Activated CD4-positive, alpha-beta memory T cell treated with anti-CD3 and anti-CD28 coated beads for 36 hours (primary cell): ENCODE measurements at regions of chrX and their contacts with region 1.

Region 1: GRCh38 chrX:78945186-78945912 is at the start of gene P2RY10:
- DNase-seq: peak; percentile 38
- H3K4me3 Mint-ChIP-seq: peak within 1 kb of the TSS; percentile 85
- H3K27ac Mint-ChIP-seq: peak within 1 kb of the TSS; percentile 90
- H3K4me1 Mint-ChIP-seq: peaks cover 44% of the 10 kb centered on the region
- H3K27me3 Mint-ChIP-seq: no peaks in the 10 kb centered on the region
- total RNA-seq, gene P2RY10: 38.8 to 39.3 TPM

Region 2: GRCh38 chrX:78103623-78104446 is 841.5 kb before region 1 on chrX and contains the start of gene PGK1:
- CTCF ChIA-PET with region 1: no interaction called
- POLR2A ChIA-PET with region 1: interaction called, 4 read pairs
- intact Hi-C with region 1: loop called (anchors 10 kb)
- DNase-seq: peak; percentile 96
- H3K4me3 Mint-ChIP-seq: peak within 1 kb of the TSS; percentile 93
- H3K27ac Mint-ChIP-seq: peak within 1 kb of the TSS; percentile 90
- H3K4me1 Mint-ChIP-seq: peaks cover 40% of the 10 kb centered on the region
- H3K27me3 Mint-ChIP-seq: no peaks in the 10 kb centered on the region
- total RNA-seq, gene PGK1: 908 to 924 TPM

Region 3: DNA sequence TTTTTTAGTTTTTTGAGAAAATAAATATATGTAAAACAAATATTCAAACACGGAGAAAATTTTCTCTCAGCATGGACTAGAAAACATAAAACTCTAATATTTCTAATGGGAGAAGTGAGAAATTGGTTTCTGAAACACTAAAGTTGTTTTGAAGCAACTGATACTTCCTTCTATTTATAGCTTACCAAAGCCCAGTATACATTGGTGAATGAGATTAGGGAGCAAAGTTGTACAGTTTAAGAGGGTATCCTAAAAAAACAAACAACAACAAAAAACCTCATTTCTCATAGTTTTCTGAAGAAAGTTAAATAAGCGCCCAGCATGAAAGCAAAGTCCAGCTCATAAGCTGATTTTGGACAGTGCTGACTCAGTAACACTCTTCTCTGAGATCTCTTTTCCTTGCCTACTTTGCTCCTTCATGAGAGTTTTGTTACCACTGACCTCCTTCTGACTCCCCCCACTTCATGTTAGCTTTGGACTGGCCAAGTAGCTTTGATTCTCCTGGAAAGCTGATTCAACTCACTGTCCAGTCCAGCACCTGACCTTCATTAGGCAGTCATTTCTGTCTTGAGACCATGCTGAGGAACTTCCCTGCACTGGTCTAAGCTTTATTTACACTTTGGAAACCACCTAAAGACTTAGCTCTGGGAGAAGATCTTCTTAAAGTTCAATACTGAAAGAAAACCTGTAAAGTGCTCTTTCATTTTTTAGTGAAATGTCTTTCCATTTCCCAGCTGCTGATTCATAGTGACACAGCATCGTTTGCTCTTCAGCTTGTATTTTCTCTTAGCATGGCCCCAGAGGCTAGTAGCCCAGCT is 21.9 kb before region 1 on chrX:
- CTCF ChIA-PET with region 1: interaction called, 3 read pairs
- POLR2A ChIA-PET with region 1: no interaction called
- intact Hi-C with region 1: loop called (anchors 1 kb)
- DNase-seq: no peak
- H3K4me3 Mint-ChIP-seq: peak overlapping the region; percentile 45
- H3K27ac Mint-ChIP-seq: peak overlapping the region; percentile 91
- H3K4me1 Mint-ChIP-seq: peaks cover 13% of the 10 kb centered on the region
- H3K27me3 Mint-ChIP-seq: no peaks in the 10 kb centered on the region

Region 4: GRCh38 chrX:79036157-79036880 is 91.0 kb after region 1 on chrX:
- CTCF ChIA-PET with region 1: no interaction called
- POLR2A ChIA-PET with region 1: no interaction called
- intact Hi-C with region 1: loop called (anchors 5 kb)
- DNase-seq: no peak
- H3K4me3 Mint-ChIP-seq: peak overlapping the region; percentile 20
- H3K27ac Mint-ChIP-seq: no peak overlapping the region
- H3K4me1 Mint-ChIP-seq: peaks cover 31% of the 10 kb centered on the region
- H3K27me3 Mint-ChIP-seq: no peaks in the 10 kb centered on the region

Region 5: DNA sequence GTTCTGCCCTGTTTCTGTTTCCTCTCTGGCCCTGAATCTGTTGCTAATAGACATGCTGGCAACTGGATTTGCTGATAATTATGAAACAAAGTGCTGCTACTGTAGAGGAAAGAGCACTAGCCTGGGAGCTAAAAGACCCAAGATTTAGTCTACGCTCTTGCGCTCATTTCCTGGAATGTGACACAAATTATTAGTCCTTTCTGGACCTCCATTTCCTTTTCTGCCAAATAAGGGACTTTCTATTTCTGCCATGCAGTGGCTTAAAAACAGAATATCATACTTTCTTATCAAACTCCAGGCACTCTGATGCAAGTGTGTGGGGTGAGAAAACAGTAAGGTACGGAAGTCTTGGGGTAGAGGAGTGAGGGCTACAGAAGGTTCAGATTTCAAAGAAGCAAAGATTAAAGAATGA is 150.8 kb after region 1 on chrX:
- CTCF ChIA-PET with region 1: no interaction called
- POLR2A ChIA-PET with region 1: no interaction called
- intact Hi-C with region 1: loop called (anchors 5 kb)
- DNase-seq: no peak
- H3K4me3 Mint-ChIP-seq: peak overlapping the region; percentile 60
- H3K27ac Mint-ChIP-seq: peak overlapping the region; percentile 89
- H3K4me1 Mint-ChIP-seq: peaks cover 77% of the 10 kb centered on the region
- H3K27me3 Mint-ChIP-seq: no peaks in the 10 kb centered on the region

Region 6: GRCh38 chrX:79182616-79183015 is 237.3 kb after region 1 on chrX:
- CTCF ChIA-PET with region 1: no interaction called
- POLR2A ChIA-PET with region 1: no interaction called
- intact Hi-C with region 1: loop called (anchors 5 kb)
- DNase-seq: peak; percentile 19
- H3K4me3 Mint-ChIP-seq: peak overlapping the region; percentile 61
- H3K27ac Mint-ChIP-seq: peak overlapping the region; percentile 91
- H3K4me1 Mint-ChIP-seq: peaks cover 66% of the 10 kb centered on the region
- H3K27me3 Mint-ChIP-seq: no peaks in the 10 kb centered on the region

Region 7: GRCh38 chrX:79366873-79367749 is 421.8 kb after region 1 on chrX and contains the start of gene ITM2A:
- CTCF ChIA-PET with region 1: no interaction called
- POLR2A ChIA-PET with region 1: interaction called, 3 read pairs
- intact Hi-C with region 1: loop called (anchors 2 kb)
- DNase-seq: peak; percentile 75
- H3K4me3 Mint-ChIP-seq: peak within 1 kb of the TSS; percentile 95
- H3K27ac Mint-ChIP-seq: peak within 1 kb of the TSS; percentile 95
- H3K4me1 Mint-ChIP-seq: peaks cover 24% of the 10 kb centered on the region
- H3K27me3 Mint-ChIP-seq: no peaks in the 10 kb centered on the region
- total RNA-seq, gene ITM2A: 87.7 to 98.1 TPM